IMR-90 (cell line): ENCODE measurements at regions of chr7 and their contacts with region 1.

Region 1: DNA sequence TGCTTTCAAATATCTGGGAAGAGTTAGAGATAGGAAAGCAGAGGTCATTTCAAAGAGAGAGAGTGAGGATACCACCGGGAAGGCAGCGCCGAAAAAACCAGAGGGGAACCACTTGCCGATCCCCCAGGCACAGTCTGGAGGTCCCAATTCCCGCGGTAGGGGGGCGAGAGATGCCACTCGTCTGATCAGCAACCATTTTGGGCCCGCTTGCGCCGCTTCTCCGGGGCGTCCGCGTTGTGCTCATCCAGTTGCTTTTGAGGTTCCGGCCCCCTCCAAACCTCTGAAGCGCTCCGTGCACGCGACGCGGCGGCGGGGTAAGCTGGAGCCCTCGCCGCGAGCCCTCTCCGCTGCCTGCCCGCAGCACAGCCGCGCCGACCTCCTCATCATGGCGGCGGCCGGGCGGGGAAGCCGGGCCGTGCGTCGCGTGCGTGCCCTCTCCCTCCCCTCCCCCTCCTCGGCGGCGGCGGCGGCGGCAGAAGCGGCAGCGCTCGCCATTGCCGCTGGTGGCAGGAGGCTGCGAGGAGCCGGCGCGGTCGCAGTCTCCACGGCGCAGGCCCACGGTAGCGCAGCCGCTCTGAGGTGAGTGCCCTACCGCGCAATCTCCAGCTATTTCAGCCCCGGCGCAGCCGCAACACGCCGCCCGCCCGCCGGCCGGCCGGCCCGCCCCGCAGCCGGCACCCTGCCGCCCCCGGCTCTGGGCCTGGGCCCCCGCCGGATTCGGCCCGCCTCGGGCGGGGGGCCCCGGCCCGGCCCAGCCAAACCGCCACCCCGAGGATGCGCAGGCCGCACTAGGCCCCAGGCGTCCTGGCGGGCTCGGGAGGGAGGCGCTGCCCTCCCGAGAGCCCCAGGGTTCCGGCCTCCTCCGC is at the start of gene NRF1:
- DNase-seq: peak; percentile 89
- ATAC-seq: peak; percentile 94
- H3K4me3 ChIP-seq: peak within 1 kb of the TSS; percentile 93
- H3K27ac ChIP-seq: peak within 1 kb of the TSS; percentile 97
- H3K4me1 ChIP-seq: peaks cover 2% of the 10 kb centered on the region
- H3K27me3 ChIP-seq: no peaks in the 10 kb centered on the region
- CTCF ChIP-seq: peak; percentile 25; the same call in 1 of the 2 replicates
- POLR2A ChIP-seq: peak; percentile 87
- RAD21 ChIP-seq: no peak
- total RNA-seq, gene NRF1: 12.2 and 15.8 TPM in 2 replicates

Region 2: DNA sequence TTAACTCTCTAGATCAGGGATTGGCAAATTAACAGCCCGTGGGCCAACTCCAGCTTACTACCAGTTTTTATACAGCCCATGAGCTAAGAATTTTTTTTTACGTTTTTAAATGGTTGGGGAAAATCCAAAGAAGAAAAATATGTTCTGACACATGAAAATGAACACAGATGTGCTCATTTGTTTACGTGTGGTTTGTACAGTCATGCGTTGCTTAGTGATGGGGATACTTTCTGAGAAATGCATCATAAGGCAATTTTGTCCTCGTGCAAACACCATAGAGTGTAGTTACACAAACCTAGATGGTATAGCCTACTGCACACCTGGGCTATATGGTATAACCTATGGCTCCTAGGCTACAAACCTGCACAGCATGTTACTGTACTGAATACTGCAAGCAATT is 117.4 kb before region 1 on chr7:
- CTCF ChIA-PET with region 1: no interaction called
- POLR2A ChIA-PET with region 1: no interaction called
- dilution Hi-C with region 1: no loop called
- in situ Hi-C with region 1: no loop called
- intact Hi-C with region 1: loop called (anchors 5 kb)
- DNase-seq: peak; percentile 98
- ATAC-seq: peak; percentile 87
- H3K4me3 ChIP-seq: no peak overlapping the region
- H3K27ac ChIP-seq: no peak overlapping the region
- H3K4me1 ChIP-seq: peaks cover 7% of the 10 kb centered on the region; the same call in 1 of the 2 replicates
- H3K27me3 ChIP-seq: peaks cover 4% of the 10 kb centered on the region; the same call in 1 of the 2 replicates
- CTCF ChIP-seq: no peak
- POLR2A ChIP-seq: no peak
- RAD21 ChIP-seq: no peak

Region 3: DNA sequence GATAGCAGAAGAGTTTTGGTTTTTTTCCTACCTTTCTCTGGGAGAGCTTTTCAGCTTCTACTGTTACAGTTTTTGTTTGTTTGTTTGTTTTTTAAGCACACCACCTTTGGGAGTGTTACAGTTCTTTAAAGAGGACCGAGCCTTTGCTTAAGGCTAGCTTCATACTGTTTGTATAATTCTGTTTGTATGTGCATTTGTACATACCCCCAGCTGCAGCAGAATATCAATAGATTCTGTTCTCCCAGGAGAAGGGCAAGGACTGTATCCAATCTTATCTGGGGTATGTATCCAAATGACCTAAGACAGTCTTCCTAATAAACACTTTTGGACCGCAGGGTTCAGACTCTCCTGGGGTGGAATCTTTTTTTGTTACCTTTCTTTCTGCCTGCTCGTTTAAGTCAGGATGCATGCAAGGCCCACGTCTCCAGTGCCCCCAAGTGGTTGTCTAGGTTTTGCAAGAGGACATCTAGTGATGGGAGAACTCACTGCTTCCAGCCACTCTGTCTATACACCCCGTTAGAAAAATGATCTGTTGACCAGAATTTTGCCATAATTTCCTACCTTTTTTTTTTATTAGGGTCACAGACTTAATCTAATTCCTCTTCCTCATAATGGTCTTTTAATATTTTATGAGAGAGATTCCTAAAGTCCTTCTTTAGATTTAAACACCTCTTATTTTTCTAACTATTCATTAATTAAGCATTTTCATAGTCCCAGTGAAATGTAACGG is 24.0 kb after region 1 on chr7:
- CTCF ChIA-PET with region 1: interaction called, 7 read pairs
- POLR2A ChIA-PET with region 1: no interaction called
- dilution Hi-C with region 1: no loop called
- in situ Hi-C with region 1: no loop called
- intact Hi-C with region 1: loop called (anchors 2 kb)
- DNase-seq: peak; percentile 86
- ATAC-seq: peak; percentile 97
- H3K4me3 ChIP-seq: no peak overlapping the region
- H3K27ac ChIP-seq: no peak overlapping the region
- H3K4me1 ChIP-seq: no peaks in the 10 kb centered on the region; the same call in 1 of the 2 replicates
- H3K27me3 ChIP-seq: no peaks in the 10 kb centered on the region
- CTCF ChIP-seq: peak; percentile 92
- POLR2A ChIP-seq: no peak
- RAD21 ChIP-seq: peak; percentile 88

Region 4: GRCh38 chr7:129644634-129645230 is 33.3 kb after region 1 on chr7:
- CTCF ChIA-PET with region 1: interaction called, 12 read pairs
- POLR2A ChIA-PET with region 1: interaction called, 4 read pairs
- dilution Hi-C with region 1: no loop called
- in situ Hi-C with region 1: no loop called
- intact Hi-C with region 1: no loop called
- DNase-seq: peak; percentile 68
- ATAC-seq: peak; percentile 55
- H3K4me3 ChIP-seq: no peak overlapping the region
- H3K27ac ChIP-seq: no peak overlapping the region
- H3K4me1 ChIP-seq: peaks cover 12% of the 10 kb centered on the region
- H3K27me3 ChIP-seq: no peaks in the 10 kb centered on the region
- CTCF ChIP-seq: peak; percentile 67
- POLR2A ChIP-seq: no peak
- RAD21 ChIP-seq: peak; percentile 73

Region 5: GRCh38 chr7:129889133-129889844 is 277.8 kb after region 1 on chr7:
- CTCF ChIA-PET with region 1: no interaction called
- POLR2A ChIA-PET with region 1: no interaction called
- dilution Hi-C with region 1: no loop called
- in situ Hi-C with region 1: no loop called
- intact Hi-C with region 1: no loop called
- DNase-seq: peak; percentile 17
- ATAC-seq: no peak
- H3K4me3 ChIP-seq: no peak overlapping the region
- H3K27ac ChIP-seq: no peak overlapping the region
- H3K4me1 ChIP-seq: peaks cover 5% of the 10 kb centered on the region; the same call in 1 of the 2 replicates
- H3K27me3 ChIP-seq: no peaks in the 10 kb centered on the region
- CTCF ChIP-seq: no peak
- POLR2A ChIP-seq: no peak
- RAD21 ChIP-seq: no peak

Region 6: DNA sequence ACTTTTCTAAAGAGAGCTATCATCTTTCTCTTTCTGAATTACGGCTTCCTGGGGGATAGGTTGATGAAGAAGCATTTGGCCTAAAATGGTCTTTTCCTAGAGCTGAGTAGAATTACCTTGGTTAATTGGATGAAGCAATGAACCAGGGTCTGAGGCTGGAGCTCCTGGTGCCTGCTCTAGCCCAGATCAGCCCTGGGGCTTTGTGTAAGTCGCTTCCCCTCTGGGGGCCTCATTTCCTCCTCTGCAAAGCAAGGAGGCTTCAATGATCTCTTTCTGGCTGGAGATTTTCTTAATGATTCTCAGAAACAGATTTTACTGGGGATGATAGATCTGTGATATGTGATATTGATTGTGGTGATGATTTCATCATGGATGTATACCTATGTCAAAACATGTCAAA is 651.7 kb after region 1 on chr7:
- CTCF ChIA-PET with region 1: no interaction called
- POLR2A ChIA-PET with region 1: interaction called, 12 read pairs
- dilution Hi-C with region 1: no loop called
- in situ Hi-C with region 1: no loop called
- intact Hi-C with region 1: no loop called
- DNase-seq: no peak
- ATAC-seq: no peak
- H3K4me3 ChIP-seq: no peak overlapping the region
- H3K27ac ChIP-seq: no peak overlapping the region
- H3K4me1 ChIP-seq: no peaks in the 10 kb centered on the region
- H3K27me3 ChIP-seq: 0 out of 2 replicates have a peak, but pooled peaks cover 2% of the 10 kb centered on the region
- CTCF ChIP-seq: no peak
- POLR2A ChIP-seq: no peak
- RAD21 ChIP-seq: no peak